CD4-positive, alpha-beta memory T cell (primary cell): ENCODE measurements at regions of chr12 and their contacts with region 1.

Region 1: GRCh38 chr12:111412007-111412829 is 6.5 kb downstream of the SH2B3 start:
- DNase-seq: no peak
- H3K4me3 ChIP-seq: no peak overlapping the region
- H3K4me3 Mint-ChIP-seq: peak overlapping the region; percentile 18 to 87 (median 79)
- H3K27ac ChIP-seq: peak overlapping the region; percentile 97
- H3K27ac Mint-ChIP-seq: peak overlapping the region; percentile 90 to 98 (median 93)
- H3K4me1 ChIP-seq: peaks cover 81% of the 10 kb centered on the region
- H3K4me1 Mint-ChIP-seq: peaks cover 49 to 95% (median 78%) of the 10 kb centered on the region in 4 donors
- H3K27me3 ChIP-seq: no peaks in the 10 kb centered on the region
- H3K27me3 Mint-ChIP-seq: no peaks in the 10 kb centered on the region

Region 2: DNA sequence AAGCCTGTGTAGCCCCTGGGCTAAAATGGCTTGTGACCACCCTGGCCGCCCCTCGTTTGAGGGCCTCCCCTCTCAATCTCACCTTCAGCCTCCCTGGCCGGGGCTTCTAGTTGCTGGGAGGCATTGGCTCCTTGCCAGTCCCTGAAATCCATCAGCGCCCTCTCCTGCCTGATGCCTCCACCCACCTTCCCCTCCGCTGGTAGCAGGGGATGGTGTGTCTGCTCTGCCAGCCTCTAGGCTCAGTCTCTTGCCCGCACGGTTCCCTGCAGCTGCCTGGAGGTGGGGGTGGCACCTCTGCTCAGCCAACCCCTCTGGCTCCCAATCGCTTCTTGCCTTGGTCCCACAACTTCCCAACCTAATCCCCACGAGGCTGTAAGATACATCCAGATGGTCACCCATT is 211.2 kb before region 1 on chr12:
- CTCF ChIA-PET with region 1: no interaction called
- POLR2A ChIA-PET with region 1: no interaction called
- intact Hi-C with region 1: no loop called
- DNase-seq: no peak
- H3K4me3 ChIP-seq: no peak overlapping the region
- H3K4me3 Mint-ChIP-seq: peak overlapping the region in 2 of 8 donors; percentile 24 to 52
- H3K27ac ChIP-seq: no peak overlapping the region
- H3K27ac Mint-ChIP-seq: no peak overlapping the region
- H3K4me1 ChIP-seq: no peaks in the 10 kb centered on the region
- H3K4me1 Mint-ChIP-seq: peaks cover 0 to 6% (median 5%) of the 10 kb centered on the region in 4 donors
- H3K27me3 ChIP-seq: no peaks in the 10 kb centered on the region
- H3K27me3 Mint-ChIP-seq: peaks cover 18 to 25% of the 10 kb centered on the region in 2 donors

Region 3: GRCh38 chr12:111424793-111425251 is 12.6 kb after region 1 on chr12:
- CTCF ChIA-PET with region 1: interaction called, 19 read pairs
- POLR2A ChIA-PET with region 1: interaction called, 258 read pairs
- intact Hi-C with region 1: no loop called
- DNase-seq: no peak
- H3K4me3 ChIP-seq: no peak overlapping the region
- H3K4me3 Mint-ChIP-seq: peak overlapping the region; percentile 15 to 82 (median 46)
- H3K27ac ChIP-seq: peak overlapping the region; percentile 98
- H3K27ac Mint-ChIP-seq: peak overlapping the region; percentile 77 to 100 (median 96)
- H3K4me1 ChIP-seq: peaks cover 59% of the 10 kb centered on the region
- H3K4me1 Mint-ChIP-seq: peaks cover 40 to 81% (median 60%) of the 10 kb centered on the region in 4 donors
- H3K27me3 ChIP-seq: no peaks in the 10 kb centered on the region
- H3K27me3 Mint-ChIP-seq: no peaks in the 10 kb centered on the region

Region 4: GRCh38 chr12:111788178-111788654 is 376.0 kb after region 1 on chr12:
- CTCF ChIA-PET with region 1: no interaction called
- POLR2A ChIA-PET with region 1: no interaction called
- intact Hi-C with region 1: no loop called
- DNase-seq: no peak
- H3K4me3 ChIP-seq: no peak overlapping the region
- H3K4me3 Mint-ChIP-seq: no peak overlapping the region
- H3K27ac ChIP-seq: no peak overlapping the region
- H3K27ac Mint-ChIP-seq: no peak overlapping the region
- H3K4me1 ChIP-seq: no peaks in the 10 kb centered on the region
- H3K4me1 Mint-ChIP-seq: no peaks in the 10 kb centered on the region
- H3K27me3 ChIP-seq: no peaks in the 10 kb centered on the region
- H3K27me3 Mint-ChIP-seq: no peaks in the 10 kb centered on the region